Vagina (tissue), 2 donors: ENCODE measurements at regions of chr4 and their contacts with region 1.

Region 1: DNA sequence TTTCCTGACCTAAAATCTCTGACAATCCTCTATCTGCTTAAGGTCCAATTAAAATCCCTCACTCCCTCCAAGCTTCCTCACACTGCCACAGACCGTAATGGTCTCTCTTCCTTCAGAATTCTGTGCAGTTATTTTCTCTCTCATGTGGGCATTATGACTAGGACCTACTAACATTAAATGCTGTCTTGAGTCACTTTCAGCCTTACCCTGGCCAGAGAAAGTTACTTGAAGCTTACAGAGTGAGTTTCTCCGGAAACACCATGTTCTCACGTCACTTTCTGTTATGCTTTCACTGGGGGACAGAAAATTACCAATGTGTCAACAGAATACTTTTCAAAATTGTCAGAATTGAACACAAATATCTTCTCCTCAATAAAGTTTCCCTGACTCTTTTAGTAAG is 271.8 kb downstream of the INPP4B start:
- DNase-seq: no peak
- H3K4me3 ChIP-seq: no peak overlapping the region
- H3K27ac ChIP-seq: no peak overlapping the region
- H3K4me1 ChIP-seq: no peaks in the 10 kb centered on the region
- H3K27me3 ChIP-seq: no peaks in the 10 kb centered on the region
- CTCF ChIP-seq: no peak
- POLR2A ChIP-seq: no peak

Region 2: GRCh38 chr4:142556570-142557238 is 17.6 kb before region 1 on chr4:
- intact Hi-C with region 1: loop called (anchors 1 kb)
- DNase-seq: no peak
- H3K4me3 ChIP-seq: no peak overlapping the region
- H3K27ac ChIP-seq: no peak overlapping the region
- H3K4me1 ChIP-seq: peaks cover 6% of the 10 kb centered on the region
- H3K27me3 ChIP-seq: no peaks in the 10 kb centered on the region
- CTCF ChIP-seq: no peak
- POLR2A ChIP-seq: no peak

Region 3: DNA sequence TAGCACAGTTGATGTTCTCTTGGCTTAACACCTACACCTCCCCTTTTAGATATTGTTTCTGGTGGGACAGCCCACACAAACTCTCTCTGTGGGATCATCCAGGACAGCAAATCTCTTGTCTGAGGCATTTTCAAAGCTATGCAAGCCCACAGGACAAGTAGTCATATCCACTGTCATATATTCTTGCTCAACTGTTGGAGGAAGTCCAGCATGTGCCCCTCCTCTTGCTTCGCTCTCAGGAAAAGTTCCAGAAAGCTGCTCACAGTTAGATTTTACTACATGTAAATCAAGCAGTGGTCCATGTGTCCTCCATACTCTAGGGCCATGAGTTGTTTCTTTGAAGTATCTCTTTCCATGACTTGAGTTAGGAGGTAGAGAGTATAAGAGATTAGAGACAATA is 11.1 kb after region 1 on chr4:
- intact Hi-C with region 1: no loop called
- DNase-seq: no peak
- H3K4me3 ChIP-seq: no peak overlapping the region
- H3K27ac ChIP-seq: no peak overlapping the region
- H3K4me1 ChIP-seq: no peaks in the 10 kb centered on the region
- H3K27me3 ChIP-seq: no peaks in the 10 kb centered on the region
- CTCF ChIP-seq: no peak
- POLR2A ChIP-seq: no peak